Activated CD4-positive, alpha-beta T cell treated with anti-CD3 and anti-CD28 coated beads, Interleukin-2, amount 10 ng/mL, durations not matched to agents 24 days and 14 days (primary cell): ENCODE measurements at regions of chr1 and their contacts with region 1.

Region 1: DNA sequence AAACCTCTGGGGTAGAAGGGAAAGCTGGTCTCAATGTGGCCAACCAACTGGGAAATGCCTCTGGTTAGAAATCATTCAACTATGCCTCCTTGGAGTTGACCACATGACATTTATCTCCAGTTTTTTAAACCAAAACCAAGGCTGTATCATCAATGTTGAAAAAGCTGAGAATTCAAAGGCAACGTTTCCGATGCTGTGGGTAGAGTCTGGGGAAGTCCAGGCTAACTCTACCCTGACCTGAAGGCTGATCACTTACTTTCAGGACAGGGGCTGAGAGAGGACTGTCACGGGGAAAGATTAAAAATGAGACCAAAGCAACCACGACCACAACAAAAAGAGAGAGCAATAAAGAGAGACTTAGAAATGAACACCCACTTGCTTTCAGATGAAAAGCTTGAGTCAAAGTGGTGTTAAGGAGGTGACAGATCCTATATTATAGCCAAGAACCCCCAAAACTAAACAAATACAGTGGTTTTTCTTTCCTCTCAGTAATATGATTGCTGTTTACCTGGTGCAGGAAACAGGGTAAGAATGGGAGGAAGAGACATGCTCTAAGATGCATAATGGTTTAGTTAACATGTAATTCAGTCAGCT is 90.8 kb upstream of the TNFSF4 start:
- DNase-seq: peak; percentile 68
- H3K4me3 Mint-ChIP-seq: no peak overlapping the region
- H3K27ac Mint-ChIP-seq: peak overlapping the region; percentile 51
- H3K4me1 Mint-ChIP-seq: peaks cover 20% of the 10 kb centered on the region
- H3K27me3 Mint-ChIP-seq: peaks cover 22% of the 10 kb centered on the region

Region 2: DNA sequence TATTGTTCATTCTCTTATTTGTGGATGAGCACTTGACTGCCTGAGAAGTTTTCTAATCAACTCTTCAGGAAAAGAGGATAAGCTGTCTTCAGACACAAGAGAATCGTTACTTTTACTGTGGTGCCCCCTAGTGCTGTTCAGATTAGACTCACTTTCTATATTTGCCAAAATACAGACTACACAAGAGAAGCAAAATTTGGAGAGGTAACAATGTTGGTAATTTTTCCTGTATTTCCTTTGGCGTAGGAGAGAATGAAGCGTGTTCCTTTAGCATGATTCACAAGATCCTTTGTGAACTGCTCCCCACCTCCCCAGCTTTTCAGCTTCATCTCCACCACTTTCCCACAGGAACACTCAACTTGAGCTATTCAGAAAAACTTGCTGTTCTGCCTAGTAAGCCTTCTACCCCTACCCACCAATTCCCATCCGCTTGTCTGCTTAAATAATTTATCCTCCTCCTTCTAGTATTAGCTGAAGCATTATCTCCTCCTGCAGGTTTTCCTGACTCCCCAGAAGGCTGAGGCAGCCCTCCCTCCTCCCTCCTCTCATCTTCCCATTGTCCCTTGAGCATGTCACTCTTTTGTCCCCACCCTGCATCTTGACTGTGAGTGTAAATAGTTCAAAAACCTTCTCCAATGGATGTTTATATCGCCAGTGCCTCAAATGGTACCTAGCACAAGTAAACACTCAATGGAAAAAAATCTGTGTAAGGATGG is 95.3 kb before region 1 on chr1:
- intact Hi-C with region 1: loop called (anchors 5 kb)
- DNase-seq: peak; percentile 67
- H3K4me3 Mint-ChIP-seq: no peak overlapping the region
- H3K27ac Mint-ChIP-seq: no peak overlapping the region
- H3K4me1 Mint-ChIP-seq: peaks cover 32% of the 10 kb centered on the region
- H3K27me3 Mint-ChIP-seq: peaks cover 32% of the 10 kb centered on the region

Region 3: GRCh38 chr1:173224280-173224892 is 73.5 kb before region 1 on chr1:
- intact Hi-C with region 1: loop called (anchors 5 kb)
- DNase-seq: no peak
- H3K4me3 Mint-ChIP-seq: no peak overlapping the region
- H3K27ac Mint-ChIP-seq: no peak overlapping the region
- H3K4me1 Mint-ChIP-seq: peaks cover 2% of the 10 kb centered on the region
- H3K27me3 Mint-ChIP-seq: peaks cover 5% of the 10 kb centered on the region

Region 4: DNA sequence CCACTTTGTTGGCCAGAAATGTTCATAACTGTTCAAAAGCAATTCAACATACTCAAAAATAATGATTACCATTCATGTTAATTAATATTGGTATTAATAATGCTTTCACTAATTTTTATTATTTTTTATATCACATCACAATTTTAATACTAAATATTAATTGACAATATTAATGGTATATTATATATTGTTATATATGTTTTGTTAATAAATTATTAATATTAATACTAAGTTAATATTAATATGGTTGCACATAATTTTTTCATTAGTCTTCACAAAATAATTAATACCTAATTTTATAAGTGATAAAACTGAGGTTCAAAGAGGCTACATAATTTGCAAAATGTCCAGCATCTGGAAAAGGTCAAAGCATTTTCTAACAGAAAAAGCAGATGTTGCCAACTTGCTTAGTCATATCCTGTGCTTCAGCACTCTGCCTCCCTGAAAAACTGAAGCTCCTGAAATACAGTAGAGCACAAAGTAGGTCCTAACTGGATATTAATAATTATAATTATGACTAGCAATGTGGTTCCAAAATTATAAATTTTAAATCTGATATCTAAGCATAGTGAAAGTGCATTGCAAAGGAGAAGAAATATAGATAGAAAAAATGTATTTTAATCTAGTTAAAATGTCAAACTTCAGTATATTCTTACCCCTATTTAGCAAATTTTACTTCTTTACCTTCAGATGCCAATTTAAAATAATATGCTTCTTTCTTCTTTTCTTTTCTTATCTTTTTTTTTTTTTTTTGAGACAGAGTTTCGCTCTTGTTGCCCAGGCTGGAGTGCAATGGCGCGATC is 32.5 kb after region 1 on chr1:
- intact Hi-C with region 1: loop called (anchors 1 kb)
- DNase-seq: no peak
- H3K4me3 Mint-ChIP-seq: peak overlapping the region; percentile 63
- H3K27ac Mint-ChIP-seq: no peak overlapping the region
- H3K4me1 Mint-ChIP-seq: peaks cover 19% of the 10 kb centered on the region
- H3K27me3 Mint-ChIP-seq: no peaks in the 10 kb centered on the region

Region 5: GRCh38 chr1:173409613-173410012 is 111.7 kb after region 1 on chr1:
- intact Hi-C with region 1: loop called (anchors 5 kb)
- DNase-seq: no peak
- H3K4me3 Mint-ChIP-seq: no peak overlapping the region
- H3K27ac Mint-ChIP-seq: no peak overlapping the region
- H3K4me1 Mint-ChIP-seq: peaks cover 13% of the 10 kb centered on the region
- H3K27me3 Mint-ChIP-seq: no peaks in the 10 kb centered on the region

Region 6: GRCh38 chr1:174153085-174153825 is 855.4 kb after region 1 on chr1:
- intact Hi-C with region 1: loop called (anchors 2 kb)
- DNase-seq: peak; percentile 61
- H3K4me3 Mint-ChIP-seq: no peak overlapping the region
- H3K27ac Mint-ChIP-seq: peak overlapping the region; percentile 63
- H3K4me1 Mint-ChIP-seq: peaks cover 38% of the 10 kb centered on the region
- H3K27me3 Mint-ChIP-seq: no peaks in the 10 kb centered on the region